Caco-2 (cell line): ENCODE measurements at regions of chr2 and their contacts with region 1.

Region 1: GRCh38 chr2:213284105-213285090 is at the start of gene SPAG16:
- DNase-seq: peak; percentile 99
- H3K4me3 ChIP-seq: peak within 1 kb of the TSS; percentile 73
- H3K4me3 Mint-ChIP-seq: peak within 1 kb of the TSS; percentile 85
- H3K27ac Mint-ChIP-seq: peak within 1 kb of the TSS; percentile 91
- H3K4me1 ChIP-seq: peaks cover 12% of the 10 kb centered on the region
- H3K4me1 Mint-ChIP-seq: peaks cover 6% of the 10 kb centered on the region
- H3K27me3 ChIP-seq: no peaks in the 10 kb centered on the region
- H3K27me3 Mint-ChIP-seq: no peaks in the 10 kb centered on the region
- CTCF ChIP-seq: no peak
- total RNA-seq, gene SPAG16: 21.5 and 25.3 TPM in 2 replicates

Region 2: GRCh38 chr2:213166109-213166508 is 118.3 kb before region 1 on chr2:
- CTCF ChIA-PET with region 1: no interaction called
- POLR2A ChIA-PET with region 1: no interaction called
- intact Hi-C with region 1: no loop called
- DNase-seq: no peak
- H3K4me3 ChIP-seq: no peak overlapping the region
- H3K4me3 Mint-ChIP-seq: no peak overlapping the region
- H3K27ac Mint-ChIP-seq: no peak overlapping the region
- H3K4me1 ChIP-seq: peaks cover 6% of the 10 kb centered on the region; the same call in 1 of the 2 replicates
- H3K4me1 Mint-ChIP-seq: peaks cover 6% of the 10 kb centered on the region
- H3K27me3 ChIP-seq: no peaks in the 10 kb centered on the region
- H3K27me3 Mint-ChIP-seq: no peaks in the 10 kb centered on the region
- CTCF ChIP-seq: no peak

Region 3: GRCh38 chr2:213261771-213262170 is 22.6 kb before region 1 on chr2:
- CTCF ChIA-PET with region 1: no interaction called
- POLR2A ChIA-PET with region 1: no interaction called
- intact Hi-C with region 1: loop called (anchors 1 kb)
- DNase-seq: no peak
- H3K4me3 ChIP-seq: no peak overlapping the region
- H3K4me3 Mint-ChIP-seq: no peak overlapping the region
- H3K27ac Mint-ChIP-seq: no peak overlapping the region
- H3K4me1 ChIP-seq: 0 out of 2 replicates have a peak, but pooled peaks cover 3% of the 10 kb centered on the region
- H3K4me1 Mint-ChIP-seq: no peaks in the 10 kb centered on the region
- H3K27me3 ChIP-seq: no peaks in the 10 kb centered on the region
- H3K27me3 Mint-ChIP-seq: no peaks in the 10 kb centered on the region
- CTCF ChIP-seq: no peak

Region 4: GRCh38 chr2:213353419-213353818 is 69.0 kb after region 1 on chr2:
- CTCF ChIA-PET with region 1: no interaction called
- POLR2A ChIA-PET with region 1: no interaction called
- intact Hi-C with region 1: no loop called
- DNase-seq: no peak
- H3K4me3 ChIP-seq: no peak overlapping the region
- H3K4me3 Mint-ChIP-seq: no peak overlapping the region
- H3K27ac Mint-ChIP-seq: no peak overlapping the region
- H3K4me1 ChIP-seq: no peaks in the 10 kb centered on the region
- H3K4me1 Mint-ChIP-seq: no peaks in the 10 kb centered on the region
- H3K27me3 ChIP-seq: no peaks in the 10 kb centered on the region
- H3K27me3 Mint-ChIP-seq: no peaks in the 10 kb centered on the region
- CTCF ChIP-seq: no peak